ENCODE measurements at regions of chr18 and their contacts with region 1.

Region 1: GRCh38 chr18:45690975-45691815 is 32.8 kb upstream of the SLC14A1 start:
- H3K4me3 Mint-ChIP-seq: no peak overlapping the region
- H3K27ac Mint-ChIP-seq: no peak overlapping the region
- H3K4me1 Mint-ChIP-seq: peaks cover 27% of the 10 kb centered on the region
- H3K27me3 Mint-ChIP-seq: no peaks in the 10 kb centered on the region

Region 2: GRCh38 chr18:45664824-45665763 is 26.1 kb before region 1 on chr18:
- intact Hi-C with region 1: loop called (anchors 2 kb)
- H3K4me3 Mint-ChIP-seq: no peak overlapping the region
- H3K27ac Mint-ChIP-seq: no peak overlapping the region
- H3K4me1 Mint-ChIP-seq: peaks cover 40% of the 10 kb centered on the region
- H3K27me3 Mint-ChIP-seq: no peaks in the 10 kb centered on the region

Region 3: GRCh38 chr18:45839414-45840395 is 148.5 kb after region 1 on chr18:
- intact Hi-C with region 1: loop called (anchors 2 kb)
- H3K4me3 Mint-ChIP-seq: no peak overlapping the region
- H3K27ac Mint-ChIP-seq: no peak overlapping the region
- H3K4me1 Mint-ChIP-seq: peaks cover 32% of the 10 kb centered on the region
- H3K27me3 Mint-ChIP-seq: peaks cover 27% of the 10 kb centered on the region

Region 4: DNA sequence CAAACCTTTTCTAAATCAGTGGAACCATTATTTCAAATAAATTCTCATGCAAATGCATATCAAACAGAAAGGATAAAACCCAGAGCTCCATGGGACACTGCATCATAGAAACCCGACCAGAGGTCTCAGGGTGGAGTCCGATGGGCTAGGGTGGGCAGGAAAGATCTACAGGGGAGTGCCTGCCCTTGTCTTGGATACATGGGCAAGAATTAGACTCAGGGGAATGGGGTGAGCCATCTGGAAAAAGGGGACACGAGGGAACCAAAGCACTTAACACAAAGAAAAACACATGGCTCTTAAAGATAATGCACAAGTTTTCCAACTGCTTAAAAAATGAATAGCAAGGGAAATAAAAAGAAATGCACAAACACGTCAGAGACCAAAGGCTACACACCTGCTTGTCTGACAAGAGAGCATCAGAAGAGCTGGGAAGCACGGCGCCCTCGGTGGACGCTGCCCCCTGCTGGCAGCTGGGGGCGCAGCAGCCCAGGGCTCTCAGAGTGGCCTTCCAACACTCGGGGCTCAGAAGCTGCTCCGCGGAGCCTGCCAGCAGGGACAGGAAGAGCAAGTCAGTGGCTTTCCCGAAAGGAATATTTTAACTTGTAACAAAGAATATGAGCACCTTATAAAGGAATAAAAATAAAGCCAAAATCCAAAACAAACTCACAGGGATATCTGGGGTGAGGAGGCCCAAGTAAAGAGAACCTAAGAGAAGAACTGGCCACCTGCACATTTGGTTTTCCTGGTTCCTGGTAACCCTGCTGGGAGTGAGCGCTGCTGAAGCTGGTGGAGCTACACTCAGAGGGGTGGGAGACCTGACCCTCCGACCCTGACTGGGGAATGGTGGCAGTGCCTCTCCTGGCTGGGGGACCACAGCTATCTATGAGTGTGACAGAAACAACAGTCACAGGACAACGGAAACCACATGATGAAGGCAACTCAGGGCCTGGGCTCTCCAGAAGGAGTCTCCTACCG is 188.8 kb after region 1 on chr18:
- intact Hi-C with region 1: loop called (anchors 1 kb)
- H3K4me3 Mint-ChIP-seq: no peak overlapping the region
- H3K27ac Mint-ChIP-seq: no peak overlapping the region
- H3K4me1 Mint-ChIP-seq: peaks cover 7% of the 10 kb centered on the region
- H3K27me3 Mint-ChIP-seq: no peaks in the 10 kb centered on the region

Region 5: DNA sequence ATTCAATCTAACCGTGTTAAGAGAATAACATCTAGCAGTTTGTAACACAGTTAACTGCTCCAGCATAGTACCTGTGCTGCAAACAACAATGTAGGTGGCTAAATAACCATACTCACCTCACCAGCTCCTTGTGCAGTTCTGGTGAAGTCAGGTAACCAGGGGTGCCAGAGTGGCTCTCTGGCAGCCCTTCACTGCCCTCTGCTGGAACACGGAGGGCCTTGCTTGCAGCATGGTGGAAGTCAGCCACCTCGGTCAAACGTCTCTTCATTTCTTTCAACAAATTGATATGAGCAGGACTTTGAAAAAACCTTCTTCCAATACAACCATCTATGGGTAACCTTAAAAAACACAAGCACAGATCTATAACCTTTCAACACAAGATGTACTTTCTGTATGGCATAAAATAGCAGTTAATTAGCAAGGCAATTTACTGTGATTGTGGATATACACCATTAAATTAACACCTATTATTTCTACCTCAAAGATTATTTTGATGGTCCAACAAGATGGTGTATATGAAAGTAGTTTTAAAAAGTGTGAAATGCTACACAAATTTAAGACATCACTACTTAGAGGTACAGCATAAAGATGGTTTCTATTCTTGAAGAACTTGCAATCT is 219.3 kb after region 1 on chr18:
- intact Hi-C with region 1: loop called (anchors 1 kb)
- H3K4me3 Mint-ChIP-seq: no peak overlapping the region
- H3K27ac Mint-ChIP-seq: no peak overlapping the region
- H3K4me1 Mint-ChIP-seq: no peaks in the 10 kb centered on the region
- H3K27me3 Mint-ChIP-seq: no peaks in the 10 kb centered on the region

Region 6: DNA sequence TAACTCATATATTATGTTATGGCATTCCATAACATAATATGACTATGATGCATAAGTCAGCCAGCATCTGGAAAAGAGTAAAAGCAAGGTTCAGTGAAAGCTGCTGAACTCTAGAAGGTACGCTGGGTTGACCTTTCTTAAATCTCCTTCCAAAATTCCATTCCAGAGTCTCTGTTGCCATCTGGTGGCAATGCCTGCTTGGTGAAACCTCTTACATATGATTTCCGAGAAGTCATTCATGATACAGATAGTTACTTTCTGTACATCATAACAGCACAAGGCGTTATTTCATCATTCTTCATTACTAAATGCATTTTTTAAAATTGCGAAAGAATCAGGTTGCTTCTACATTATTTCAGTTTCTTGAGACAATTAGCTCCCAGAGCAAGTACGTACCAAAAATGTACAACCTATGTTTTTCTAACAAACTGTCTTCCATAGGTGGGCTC is 282.9 kb after region 1 on chr18:
- intact Hi-C with region 1: loop called (anchors 1 kb)
- H3K4me3 Mint-ChIP-seq: no peak overlapping the region
- H3K27ac Mint-ChIP-seq: no peak overlapping the region
- H3K4me1 Mint-ChIP-seq: no peaks in the 10 kb centered on the region
- H3K27me3 Mint-ChIP-seq: no peaks in the 10 kb centered on the region

Region 7: GRCh38 chr18:46104128-46104911 is 413.1 kb after region 1 on chr18 and contains the start of gene HAUS1:
- intact Hi-C with region 1: loop called (anchors 10 kb)
- H3K4me3 Mint-ChIP-seq: peak within 1 kb of the TSS; percentile 99
- H3K27ac Mint-ChIP-seq: peak within 1 kb of the TSS; percentile 89
- H3K4me1 Mint-ChIP-seq: peaks cover 13% of the 10 kb centered on the region
- H3K27me3 Mint-ChIP-seq: no peaks in the 10 kb centered on the region